GM12878 (cell line): ENCODE measurements at regions of chr19 and their contacts with region 1.

Region 1: GRCh38 chr19:48321622-48322591 is 3.4 kb upstream of the EMP3 start:
- DNase-seq: peak; percentile 92
- ATAC-seq: peak; percentile 79
- H3K4me3 ChIP-seq: peak overlapping the region; percentile 73
- H3K27ac ChIP-seq: peak overlapping the region; percentile 96
- H3K4me1 ChIP-seq: peaks cover 31% of the 10 kb centered on the region
- H3K27me3 ChIP-seq: no peaks in the 10 kb centered on the region
- CTCF ChIP-seq: no peak
- EP300 ChIP-seq: peak; percentile 40 to 49; a peak in 2 of 4 replicates
- POLR2A ChIP-seq: peak; percentile 86
- RAD21 ChIP-seq: no peak

Region 2: GRCh38 chr19:48340995-48341394 is 19.1 kb after region 1 on chr19:
- CTCF ChIA-PET with region 1: interaction called, 4 read pairs
- POLR2A ChIA-PET with region 1: interaction called, 194 read pairs
- RAD21 ChIA-PET with region 1: interaction called, 255 read pairs
- SMC1A ChIA-PET with region 1: interaction called, 223 read pairs
- in situ Hi-C with region 1: no loop called
- intact Hi-C with region 1: no loop called
- DNase-seq: no peak
- ATAC-seq: no peak
- H3K4me3 ChIP-seq: no peak overlapping the region
- H3K27ac ChIP-seq: no peak overlapping the region
- H3K4me1 ChIP-seq: no peaks in the 10 kb centered on the region
- H3K27me3 ChIP-seq: no peaks in the 10 kb centered on the region
- CTCF ChIP-seq: no peak
- EP300 ChIP-seq: no peak
- POLR2A ChIP-seq: no peak
- RAD21 ChIP-seq: no peak

Region 3: GRCh38 chr19:48363810-48364563 is 42.1 kb after region 1 on chr19 and contains the starts of genes SYNGR4 and TMEM143:
- CTCF ChIA-PET with region 1: interaction called, 3 read pairs
- POLR2A ChIA-PET with region 1: interaction called, 22 read pairs
- RAD21 ChIA-PET with region 1: interaction called, 9 read pairs
- SMC1A ChIA-PET with region 1: interaction called, 3 read pairs
- in situ Hi-C with region 1: no loop called
- intact Hi-C with region 1: no loop called
- DNase-seq: peak; percentile 99
- ATAC-seq: peak; percentile 90
- H3K4me3 ChIP-seq: peak within 1 kb of the TSS; percentile 82
- H3K27ac ChIP-seq: peak within 1 kb of the TSS; percentile 99
- H3K4me1 ChIP-seq: peaks cover 9% of the 10 kb centered on the region; the same call in 1 of the 2 replicates
- H3K27me3 ChIP-seq: no peaks in the 10 kb centered on the region
- CTCF ChIP-seq: no peak
- EP300 ChIP-seq: peak in 1 of 2 experiments; percentile 33; a peak in 1 of 4 replicates
- POLR2A ChIP-seq: peak; percentile 70
- RAD21 ChIP-seq: no peak
- polyA plus RNA-seq, gene SYNGR4: not detected
- polyA plus RNA-seq, gene TMEM143: 1.5 to 2.4 TPM

Region 4: DNA sequence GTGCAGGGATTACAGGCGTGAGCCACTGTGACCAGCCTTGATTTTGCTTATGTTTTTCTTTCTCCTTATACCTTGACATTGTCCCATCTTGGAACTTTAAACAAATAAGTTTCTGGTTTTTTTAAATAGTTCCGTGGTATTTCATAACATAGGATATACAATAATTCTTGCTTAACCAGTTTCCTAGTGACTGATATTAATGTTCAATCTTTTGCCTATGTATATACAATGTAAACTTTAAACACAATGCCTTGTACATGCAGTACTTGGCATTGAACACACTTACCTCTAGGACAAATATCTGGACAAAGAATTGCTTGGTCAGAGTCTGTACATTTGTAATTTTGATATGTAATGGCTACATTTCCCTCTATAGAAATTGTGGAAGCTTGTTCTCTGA is 260.3 kb after region 1 on chr19:
- CTCF ChIA-PET with region 1: interaction called, 14 read pairs
- POLR2A ChIA-PET with region 1: interaction called, 5 read pairs
- RAD21 ChIA-PET with region 1: interaction called, 12 read pairs
- SMC1A ChIA-PET with region 1: interaction called, 6 read pairs
- in situ Hi-C with region 1: loop called (anchors 5 kb)
- intact Hi-C with region 1: no loop called
- DNase-seq: no peak
- ATAC-seq: no peak
- H3K4me3 ChIP-seq: no peak overlapping the region
- H3K27ac ChIP-seq: no peak overlapping the region
- H3K4me1 ChIP-seq: peaks cover 4% of the 10 kb centered on the region
- H3K27me3 ChIP-seq: no peaks in the 10 kb centered on the region
- CTCF ChIP-seq: no peak
- EP300 ChIP-seq: no peak
- POLR2A ChIP-seq: no peak
- RAD21 ChIP-seq: no peak